Ascending aorta (tissue), 2 donors: ENCODE measurements at regions of chr10 and their contacts with region 1.

Region 1: DNA sequence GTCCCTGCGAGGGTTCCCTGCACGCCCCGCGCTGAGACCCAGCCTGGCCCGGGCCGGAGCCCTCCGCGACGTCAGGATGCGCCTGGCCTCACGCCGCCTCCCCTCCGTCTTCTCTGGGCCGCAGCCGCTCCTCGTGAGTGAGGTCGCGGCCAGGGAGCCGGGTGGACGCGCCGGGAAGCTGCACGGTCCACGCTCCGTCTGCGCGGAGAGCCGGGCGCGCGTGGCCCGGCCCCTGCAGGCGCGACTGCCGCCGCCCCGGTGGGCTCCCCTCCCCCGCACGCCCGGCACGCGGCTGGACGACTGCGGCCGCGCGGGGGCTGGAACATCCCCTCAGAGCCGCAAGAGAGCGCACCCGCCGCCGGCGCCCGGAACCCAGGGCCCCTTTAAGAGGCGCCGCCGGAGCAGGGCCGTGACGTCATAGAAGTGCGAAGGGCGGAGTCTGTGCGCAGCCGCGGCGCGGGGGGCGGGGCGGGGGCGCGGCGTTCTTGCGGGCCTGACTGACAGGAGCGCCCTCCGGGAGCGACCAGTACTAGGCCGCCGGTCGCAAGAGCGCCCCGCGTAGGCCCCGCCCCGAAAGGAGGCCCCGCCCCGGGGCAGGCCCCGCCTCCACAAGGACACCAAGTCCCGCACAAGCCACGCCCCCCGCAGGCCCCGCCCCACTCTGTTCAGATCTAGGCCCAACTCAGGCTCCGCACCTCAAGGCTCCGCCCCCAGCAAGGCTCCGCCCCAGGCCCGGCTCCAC is 445 bp upstream of the INPP5A start:
- DNase-seq: peak; percentile 100
- H3K4me3 ChIP-seq: peak overlapping the region; percentile 81 to 87
- H3K27ac ChIP-seq: peak overlapping the region; percentile 85 to 87
- H3K4me1 ChIP-seq: peaks cover 5 to 41% of the 10 kb centered on the region in 2 donors
- H3K27me3 ChIP-seq: no peaks in the 10 kb centered on the region
- CTCF ChIP-seq: peak in 2 of 3 experiments; percentile 17 to 67

Region 2: DNA sequence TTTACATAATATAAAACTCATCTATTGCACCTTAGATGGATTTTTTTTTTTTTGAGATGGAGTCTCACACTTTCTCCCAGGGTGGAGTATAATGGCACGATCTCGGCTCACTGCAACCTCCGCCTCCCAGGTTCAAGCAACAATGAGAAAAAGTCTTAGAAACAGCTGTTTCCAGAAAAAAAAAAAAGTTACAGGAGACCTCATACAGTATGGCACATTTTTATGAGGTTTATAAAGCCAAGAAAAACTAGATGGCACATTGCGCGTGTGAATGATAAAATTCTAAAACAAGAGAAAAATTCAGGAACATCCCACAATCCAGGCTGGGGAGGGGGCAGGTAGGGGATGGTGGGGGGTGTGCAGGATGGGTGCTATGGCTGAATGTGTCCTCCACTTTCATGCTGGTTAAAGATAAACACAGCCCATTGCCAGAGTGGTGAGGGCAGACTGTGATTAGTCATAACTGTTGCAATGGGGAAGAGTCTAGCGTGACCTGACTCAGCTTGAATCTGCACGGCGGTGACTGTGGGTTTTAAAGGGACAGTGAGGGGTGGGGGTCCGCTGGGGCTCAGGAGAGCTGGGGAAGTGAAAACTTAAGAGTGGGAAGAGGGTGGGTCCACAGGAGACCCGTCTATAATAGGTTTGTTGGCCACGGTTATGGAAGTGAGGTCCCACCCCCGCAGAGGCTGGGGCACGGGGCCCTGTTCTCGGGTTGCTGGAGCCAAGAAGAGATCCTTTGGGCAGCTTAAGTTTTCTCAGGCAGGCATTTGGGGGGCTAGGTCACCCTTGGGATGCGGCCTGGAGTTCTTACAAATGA is 217.1 kb before region 1 on chr10:
- intact Hi-C with region 1: no loop called
- DNase-seq: no peak
- H3K4me3 ChIP-seq: peak overlapping the region in 1 of 2 donors; percentile 1
- H3K27ac ChIP-seq: peak overlapping the region in 1 of 2 donors; percentile 2
- H3K4me1 ChIP-seq: peaks cover 3 to 7% of the 10 kb centered on the region in 2 donors
- H3K27me3 ChIP-seq: no peaks in the 10 kb centered on the region
- CTCF ChIP-seq: no peak

Region 3: DNA sequence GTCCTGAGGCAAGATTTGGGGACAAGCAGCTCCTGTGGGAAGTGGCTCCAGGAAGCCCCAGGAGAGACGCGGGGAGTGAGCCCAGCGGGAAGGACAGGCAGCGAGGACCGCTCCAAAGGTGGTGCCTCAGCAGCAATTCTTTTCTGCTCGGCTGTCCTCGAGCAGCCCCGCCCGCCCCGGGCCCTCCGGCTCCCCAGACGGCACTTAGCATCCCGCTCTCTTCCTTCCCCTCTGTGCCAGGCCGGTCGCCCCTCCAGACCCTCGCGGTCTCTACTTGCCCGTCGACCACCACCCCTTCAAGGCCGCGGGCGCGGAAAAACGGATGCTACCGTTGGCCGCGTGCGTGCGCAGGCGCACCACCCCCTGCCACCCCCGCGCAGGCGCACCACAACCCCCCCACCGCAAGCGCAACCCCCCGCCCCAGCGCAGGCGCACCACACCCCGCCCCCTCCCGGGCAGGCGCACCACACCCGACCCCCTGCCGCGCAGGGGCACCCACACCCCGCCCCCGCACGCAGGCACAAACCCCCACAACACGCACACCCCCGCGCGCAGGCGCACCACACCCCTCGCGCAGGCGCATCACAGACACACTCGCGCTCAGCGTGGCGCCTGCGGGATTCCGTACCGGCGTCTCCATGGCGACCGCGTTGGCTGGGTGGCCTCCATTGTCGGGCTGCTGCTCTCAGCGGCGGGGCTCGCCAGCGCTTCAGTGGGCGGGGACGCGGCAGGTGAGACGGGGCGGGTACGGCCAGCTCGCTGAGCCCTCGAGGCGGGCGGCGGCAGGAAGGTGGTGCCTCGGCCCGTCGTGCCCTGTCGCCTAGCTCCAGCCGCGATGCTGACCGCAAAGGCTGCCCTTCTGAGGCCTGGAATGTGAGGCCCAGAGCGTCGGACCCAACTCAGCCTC is 205.4 kb before region 1 on chr10 and contains the start of gene LRRC27:
- intact Hi-C with region 1: loop called (anchors 2 kb)
- DNase-seq: peak; percentile 93 to 99
- H3K4me3 ChIP-seq: peak within 1 kb of the TSS; percentile 81 to 87
- H3K27ac ChIP-seq: peak within 1 kb of the TSS; percentile 67 to 76
- H3K4me1 ChIP-seq: peaks cover 4 to 20% of the 10 kb centered on the region in 2 donors
- H3K27me3 ChIP-seq: no peaks in the 10 kb centered on the region
- CTCF ChIP-seq: no peak
- total RNA-seq, gene LRRC27: 2.0 TPM

Region 4: GRCh38 chr10:132458593-132459300 is 78.4 kb before region 1 on chr10:
- intact Hi-C with region 1: no loop called
- DNase-seq: no peak
- H3K4me3 ChIP-seq: no peak overlapping the region
- H3K27ac ChIP-seq: no peak overlapping the region
- H3K4me1 ChIP-seq: peaks cover 5 to 6% of the 10 kb centered on the region in 2 donors
- H3K27me3 ChIP-seq: no peaks in the 10 kb centered on the region
- CTCF ChIP-seq: peak; percentile 93 to 99 (median 98)

Region 5: DNA sequence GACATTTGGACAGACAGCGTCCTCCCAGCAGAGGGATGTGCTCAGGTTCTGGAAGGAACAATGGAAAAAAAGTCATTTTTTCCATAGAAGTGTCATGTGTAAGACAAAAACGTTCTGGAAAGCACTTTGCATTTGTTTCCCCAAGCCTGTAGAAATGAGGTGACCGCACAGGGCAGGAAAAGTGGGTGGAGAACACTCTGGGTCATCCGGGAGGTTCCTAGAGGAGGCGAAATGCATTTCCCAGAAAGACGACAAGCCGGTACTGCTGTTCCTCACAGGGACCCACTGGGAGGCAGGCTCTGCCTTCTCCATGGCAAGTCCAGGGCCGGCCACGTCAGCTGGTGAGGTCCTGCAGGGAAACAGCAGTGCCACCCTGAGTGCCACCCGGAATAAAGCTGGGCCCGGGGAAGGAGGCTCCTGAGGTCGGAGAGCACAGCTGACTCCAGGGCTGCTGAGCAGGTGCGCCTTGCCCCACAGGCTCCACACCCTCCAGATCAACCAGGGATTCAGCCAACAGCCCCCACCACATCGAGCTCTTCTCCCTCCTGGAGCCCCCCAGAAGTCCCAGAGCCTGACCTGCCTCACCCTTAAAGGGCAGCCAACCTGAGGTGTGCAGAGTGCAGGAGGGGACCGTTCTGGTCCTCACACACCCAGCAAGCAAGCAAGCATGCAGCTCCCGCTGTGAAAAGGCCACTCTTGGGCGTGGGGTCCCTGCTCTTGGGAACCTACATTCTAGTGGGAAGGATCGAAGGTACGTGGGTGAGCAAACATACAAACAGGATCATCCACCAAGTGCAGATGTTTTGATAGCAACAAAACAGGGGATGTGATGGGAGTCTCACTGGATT is 28.3 kb before region 1 on chr10:
- intact Hi-C with region 1: loop called (anchors 2 kb)
- DNase-seq: peak; percentile 35 to 88
- H3K4me3 ChIP-seq: no peak overlapping the region
- H3K27ac ChIP-seq: peak overlapping the region; percentile 25 to 26
- H3K4me1 ChIP-seq: peaks cover 0 to 5% of the 10 kb centered on the region in 2 donors
- H3K27me3 ChIP-seq: no peaks in the 10 kb centered on the region
- CTCF ChIP-seq: peak; percentile 60 to 71 (median 65)

Region 6: GRCh38 chr10:132571650-132572535 is 34.8 kb after region 1 on chr10:
- intact Hi-C with region 1: loop called (anchors 2 kb)
- DNase-seq: peak; percentile 48 to 84
- H3K4me3 ChIP-seq: peak overlapping the region in 1 of 2 donors; percentile 34
- H3K27ac ChIP-seq: peak overlapping the region; percentile 70 to 78
- H3K4me1 ChIP-seq: peaks cover 35 to 49% of the 10 kb centered on the region in 2 donors
- H3K27me3 ChIP-seq: no peaks in the 10 kb centered on the region
- CTCF ChIP-seq: no peak

Region 7: GRCh38 chr10:132631341-132631735 is 94.2 kb after region 1 on chr10:
- intact Hi-C with region 1: loop called (anchors 1 kb)
- DNase-seq: peak; percentile 64 to 92
- H3K4me3 ChIP-seq: peak overlapping the region in 1 of 2 donors; percentile 37
- H3K27ac ChIP-seq: peak overlapping the region; percentile 97 to 98
- H3K4me1 ChIP-seq: peaks cover 34 to 73% of the 10 kb centered on the region in 2 donors
- H3K27me3 ChIP-seq: no peaks in the 10 kb centered on the region
- CTCF ChIP-seq: no peak

Region 8: GRCh38 chr10:132677473-132678227 is 140.5 kb after region 1 on chr10:
- intact Hi-C with region 1: no loop called
- DNase-seq: peak in 1 of 2 donors; percentile 51
- H3K4me3 ChIP-seq: no peak overlapping the region
- H3K27ac ChIP-seq: no peak overlapping the region
- H3K4me1 ChIP-seq: no peaks in the 10 kb centered on the region
- H3K27me3 ChIP-seq: no peaks in the 10 kb centered on the region
- CTCF ChIP-seq: no peak